CD14-positive monocyte (primary cell): ENCODE measurements at regions of chr5 and their contacts with region 1.

Region 1: DNA sequence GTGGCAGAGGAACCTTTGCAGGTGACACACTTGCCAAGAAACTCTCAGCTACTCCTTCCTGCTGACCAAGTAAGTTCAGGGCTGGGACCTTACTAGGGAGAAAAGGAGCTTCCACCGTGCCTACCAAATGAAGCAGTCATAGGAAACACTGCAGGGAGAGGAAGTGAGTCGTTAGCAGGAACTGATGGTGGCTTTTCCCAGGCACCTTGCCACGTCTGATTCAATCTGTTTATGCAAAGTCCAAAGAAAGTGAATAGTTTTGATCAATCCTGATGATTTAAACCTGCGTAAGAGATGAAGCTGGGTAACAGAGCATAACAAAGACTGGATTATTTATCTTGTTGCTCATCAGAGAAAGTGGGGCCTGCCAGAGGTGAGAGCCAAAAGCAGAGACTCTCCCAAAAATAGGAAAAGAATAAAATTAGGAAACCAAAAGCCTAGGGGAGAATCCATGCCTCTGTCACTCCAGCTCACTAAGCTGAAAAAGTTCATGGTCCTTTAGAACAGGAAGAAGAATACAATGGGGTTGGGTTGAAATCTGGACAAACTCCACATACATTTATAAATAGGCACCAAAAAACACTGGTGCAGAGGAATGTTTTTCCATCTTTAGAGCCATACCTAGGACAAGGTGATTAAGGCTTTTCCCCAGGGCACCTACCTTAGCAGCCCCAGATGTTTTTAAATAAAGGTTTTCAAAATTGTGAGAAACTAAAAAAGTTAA is 9.3 kb upstream of the PFDN1 start:
- DNase-seq: peak; percentile 54 to 79 (median 71)
- H3K4me3 ChIP-seq: peak overlapping the region in 1 of 3 experiments; percentile 22
- H3K4me3 Mint-ChIP-seq: peak overlapping the region; percentile 57 to 71
- H3K27ac ChIP-seq: peak overlapping the region in 1 of 2 donors; percentile 46
- H3K27ac Mint-ChIP-seq: peak overlapping the region in 6 of 7 donors; percentile 24 to 86 (median 78)
- H3K4me1 ChIP-seq: peaks cover 28 to 31% of the 10 kb centered on the region in 2 donors
- H3K4me1 Mint-ChIP-seq: peaks cover 32% of the 10 kb centered on the region
- H3K27me3 ChIP-seq: no peaks in the 10 kb centered on the region
- H3K27me3 Mint-ChIP-seq: peaks cover 0 to 2% (median 1%) of the 10 kb centered on the region in 3 donors
- CTCF ChIP-seq: no peak

Region 2: DNA sequence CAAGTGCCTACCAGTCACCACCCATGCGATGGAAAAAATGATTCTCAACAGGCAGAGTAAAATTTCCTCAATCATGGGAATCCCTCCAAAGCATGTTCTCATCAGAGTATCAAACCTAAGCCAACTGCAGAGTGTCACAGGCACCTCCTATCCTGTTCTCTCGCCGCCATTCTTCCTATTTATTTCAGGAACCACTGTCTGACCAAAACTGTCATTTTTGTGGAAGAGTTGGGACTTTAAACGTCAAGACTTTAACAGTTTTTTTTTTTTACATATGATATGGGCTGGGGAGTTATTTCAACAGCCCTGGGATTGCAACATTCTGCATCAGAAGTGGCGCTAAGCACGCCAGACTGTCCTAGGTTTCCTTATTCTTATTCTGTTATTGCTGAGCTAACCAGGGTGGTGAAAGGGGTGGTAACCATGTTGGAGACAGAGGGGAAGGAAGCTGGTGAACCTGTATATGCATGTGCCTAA is 38.8 kb before region 1 on chr5:
- intact Hi-C with region 1: loop called in 1 of 2 experiments (anchors 5 kb)
- DNase-seq: peak; percentile 92 to 98 (median 96)
- H3K4me3 ChIP-seq: peak overlapping the region in 2 of 3 experiments; percentile 9 to 25
- H3K4me3 Mint-ChIP-seq: peak overlapping the region in 1 of 2 donors; percentile 59
- H3K27ac ChIP-seq: peak overlapping the region; percentile 77 to 94
- H3K27ac Mint-ChIP-seq: peak overlapping the region; percentile 96 to 99 (median 97)
- H3K4me1 ChIP-seq: peaks cover 36 to 46% of the 10 kb centered on the region in 2 donors
- H3K4me1 Mint-ChIP-seq: peaks cover 44% of the 10 kb centered on the region
- H3K27me3 ChIP-seq: no peaks in the 10 kb centered on the region
- H3K27me3 Mint-ChIP-seq: no peaks in the 10 kb centered on the region
- CTCF ChIP-seq: no peak

Region 3: DNA sequence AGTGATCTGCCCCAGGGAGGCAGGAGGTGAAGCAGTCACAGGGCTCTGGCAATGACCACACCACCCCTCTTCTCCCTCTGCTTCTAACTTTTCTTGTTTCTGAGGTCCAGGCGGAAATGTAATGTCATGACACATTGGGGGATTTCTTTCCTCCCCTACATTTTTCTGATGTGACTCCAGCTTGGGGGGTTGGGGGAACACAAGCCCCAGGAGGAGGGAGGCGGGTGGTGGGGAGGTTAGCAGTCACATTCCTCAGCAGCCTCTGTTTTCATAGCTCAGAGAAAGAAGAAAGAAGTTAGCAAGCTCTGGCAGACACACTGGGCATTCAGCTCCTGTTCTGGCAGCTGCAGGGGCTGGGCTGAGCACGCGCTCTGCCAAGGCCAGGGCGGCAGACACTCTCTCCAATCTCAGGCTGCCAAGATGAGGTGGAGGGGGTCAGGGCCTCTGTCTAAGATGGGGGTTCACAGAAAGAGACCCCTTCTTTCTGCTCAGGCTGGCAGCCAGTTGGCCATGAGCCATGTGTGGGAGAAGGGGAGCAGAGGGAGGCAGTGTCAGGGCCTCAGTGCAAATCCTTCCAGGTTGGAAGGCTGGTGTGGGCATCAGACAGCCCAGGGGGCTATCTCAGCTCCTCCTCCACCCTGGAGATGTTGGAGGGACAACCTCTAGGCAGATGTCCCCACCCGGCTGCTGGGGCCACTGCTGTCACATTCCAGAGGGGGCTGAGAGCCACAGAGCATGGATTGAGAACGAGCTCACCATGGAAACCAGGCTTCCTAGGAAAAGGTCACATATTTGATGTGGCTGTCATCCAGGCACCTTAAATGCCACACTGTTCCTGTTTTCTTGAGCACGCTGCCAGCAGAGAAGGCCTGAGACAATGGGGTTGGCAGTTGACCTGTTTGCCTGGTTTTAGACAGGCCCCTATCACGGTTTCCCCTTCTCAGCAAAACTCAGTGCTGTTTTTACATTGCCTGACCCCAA is 10.8 kb after region 1 on chr5:
- intact Hi-C with region 1: loop called in 1 of 2 experiments (anchors 2 kb)
- DNase-seq: peak in 2 of 3 donors; percentile 29 to 43
- H3K4me3 ChIP-seq: no peak overlapping the region
- H3K4me3 Mint-ChIP-seq: no peak overlapping the region
- H3K27ac ChIP-seq: peak overlapping the region in 1 of 2 donors; percentile 10
- H3K27ac Mint-ChIP-seq: peak overlapping the region; percentile 6 to 99 (median 96)
- H3K4me1 ChIP-seq: peaks cover 72 to 73% of the 10 kb centered on the region in 2 donors
- H3K4me1 Mint-ChIP-seq: peaks cover 81% of the 10 kb centered on the region
- H3K27me3 ChIP-seq: no peaks in the 10 kb centered on the region
- H3K27me3 Mint-ChIP-seq: peaks cover 0 to 5% (median 4%) of the 10 kb centered on the region in 3 donors
- CTCF ChIP-seq: no peak

Region 4: DNA sequence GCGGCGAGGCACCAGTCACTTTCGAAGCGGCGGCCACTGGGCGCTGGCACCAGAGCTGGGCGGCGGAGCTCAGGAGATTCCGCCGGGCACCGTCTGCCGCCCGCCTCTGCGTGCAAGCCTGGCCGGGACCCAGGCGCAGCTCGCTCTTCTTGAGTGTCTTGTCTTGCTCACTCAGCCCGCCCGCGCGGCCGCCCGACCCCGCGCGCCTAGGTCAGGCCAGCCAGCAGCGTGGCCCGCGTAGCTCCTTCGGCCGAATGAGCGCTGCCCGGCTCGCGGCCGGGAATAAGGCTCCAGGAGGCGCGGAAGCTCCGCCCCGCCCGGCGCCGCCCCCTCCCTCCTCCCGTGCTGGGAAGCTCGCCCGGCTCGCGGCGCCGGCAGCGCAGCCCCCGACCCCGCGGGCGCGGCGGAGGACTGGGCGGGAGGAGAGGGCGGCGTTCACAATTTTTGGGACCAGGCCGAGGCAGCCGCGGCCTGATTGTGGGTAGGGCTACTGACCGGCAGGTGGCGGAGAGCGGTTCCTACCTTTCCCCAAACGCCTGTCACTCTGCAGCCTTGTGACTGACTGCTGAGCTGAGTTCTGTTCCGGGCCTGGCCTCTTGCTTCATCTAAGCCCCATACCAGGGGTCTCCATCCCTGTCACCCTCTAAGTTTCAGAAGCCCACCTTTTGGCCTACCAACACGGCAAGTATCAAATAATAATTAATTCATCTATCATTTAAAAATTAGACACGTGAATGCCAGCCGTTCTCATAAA is 34.3 kb after region 1 on chr5 and contains the start of gene HBEGF:
- intact Hi-C with region 1: loop called in 1 of 2 experiments (anchors 5 kb)
- DNase-seq: peak; percentile 70 to 79 (median 74)
- H3K4me3 ChIP-seq: peak within 1 kb of the TSS; percentile 52 to 99 (median 82)
- H3K4me3 Mint-ChIP-seq: peak within 1 kb of the TSS; percentile 94 to 100
- H3K27ac ChIP-seq: peak within 1 kb of the TSS in 1 of 2 donors; percentile 76
- H3K27ac Mint-ChIP-seq: peak within 1 kb of the TSS; percentile 54 to 95 (median 88)
- H3K4me1 ChIP-seq: peaks cover 57 to 65% of the 10 kb centered on the region in 2 donors
- H3K4me1 Mint-ChIP-seq: peaks cover 58% of the 10 kb centered on the region
- H3K27me3 ChIP-seq: no peaks in the 10 kb centered on the region
- H3K27me3 Mint-ChIP-seq: peaks cover 5 to 6% (median 5%) of the 10 kb centered on the region in 3 donors
- CTCF ChIP-seq: peak; percentile 55
- polyA plus RNA-seq, gene HBEGF: 25.2 to 548 (median 31.6) TPM